ENCODE measurements at regions of chr4 and their contacts with region 1.

Region 1: DNA sequence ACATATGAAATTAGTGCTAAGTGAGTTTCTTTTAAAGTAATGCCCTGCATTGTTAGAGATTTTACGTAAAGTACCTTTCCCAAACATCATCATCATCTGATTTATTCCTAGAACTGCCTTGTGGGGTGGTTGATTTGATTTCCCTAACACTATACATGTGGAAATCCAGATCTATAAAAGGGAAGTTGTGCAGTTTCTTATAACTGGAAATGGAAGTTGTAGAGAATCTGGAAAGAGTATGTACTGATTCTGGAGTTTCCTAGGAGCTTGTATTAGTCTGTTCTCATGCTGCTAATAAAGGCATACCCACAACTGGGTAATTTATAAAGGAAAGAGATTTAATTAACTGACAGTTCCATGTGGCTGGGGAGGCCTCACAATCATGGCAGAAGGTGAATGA is 47.9 kb downstream of the BMP2K start:
- DNase-seq: no peak
- ATAC-seq: no peak
- H3K4me3 ChIP-seq: no peak overlapping the region
- H3K4me3 Mint-ChIP-seq: no peak overlapping the region
- H3K27ac ChIP-seq: peak overlapping the region in 1 of 2 donors; percentile 3
- H3K27ac Mint-ChIP-seq: no peak overlapping the region
- H3K4me1 ChIP-seq: peaks cover 0 to 8% of the 10 kb centered on the region in 2 donors
- H3K4me1 Mint-ChIP-seq: peaks cover 48% of the 10 kb centered on the region
- H3K27me3 ChIP-seq: no peaks in the 10 kb centered on the region
- H3K27me3 Mint-ChIP-seq: no peaks in the 10 kb centered on the region
- CTCF ChIP-seq: no peak

Region 2: DNA sequence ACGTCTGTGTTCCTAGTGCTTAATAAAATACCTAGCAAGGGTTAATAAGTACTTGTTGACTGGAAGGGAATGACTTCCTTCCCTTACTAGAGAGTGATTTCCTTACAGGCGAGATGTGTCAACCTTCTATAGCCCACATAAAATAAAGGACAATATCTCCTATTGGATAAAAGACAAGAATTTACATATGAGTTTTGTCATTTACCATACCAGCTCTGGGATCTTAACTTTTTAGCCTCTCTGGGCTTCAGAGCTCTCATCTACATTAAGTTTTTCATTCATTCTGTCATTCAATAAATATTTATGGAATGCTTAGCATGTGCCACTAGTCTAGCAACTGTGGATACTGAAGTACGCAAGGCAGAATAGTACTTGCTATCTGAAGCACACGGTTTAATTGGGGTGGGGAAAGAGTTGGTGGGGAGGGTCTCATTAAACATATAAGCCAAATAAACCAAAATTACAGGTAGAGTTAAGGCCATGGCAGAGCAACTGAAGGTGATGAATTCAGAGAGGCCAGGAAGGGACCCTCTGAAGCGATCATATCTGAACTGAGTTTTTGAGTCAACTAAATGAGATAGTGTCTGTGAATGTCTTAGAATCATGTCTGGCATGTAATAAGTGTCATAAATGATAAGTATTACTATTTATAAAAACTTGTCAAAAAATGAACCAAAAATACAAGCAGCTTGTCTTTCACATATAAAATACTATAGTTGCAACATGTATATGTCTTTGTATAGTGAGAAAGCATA is 139.5 kb before region 1 on chr4:
- CTCF ChIA-PET with region 1: no interaction called
- POLR2A ChIA-PET with region 1: no interaction called
- intact Hi-C with region 1: no loop called
- DNase-seq: no peak
- ATAC-seq: no peak
- H3K4me3 ChIP-seq: no peak overlapping the region
- H3K4me3 Mint-ChIP-seq: no peak overlapping the region
- H3K27ac ChIP-seq: no peak overlapping the region
- H3K27ac Mint-ChIP-seq: no peak overlapping the region
- H3K4me1 ChIP-seq: no peaks in the 10 kb centered on the region
- H3K4me1 Mint-ChIP-seq: no peaks in the 10 kb centered on the region
- H3K27me3 ChIP-seq: no peaks in the 10 kb centered on the region
- H3K27me3 Mint-ChIP-seq: no peaks in the 10 kb centered on the region
- CTCF ChIP-seq: no peak

Region 3: GRCh38 chr4:78809928-78810835 is 13.8 kb before region 1 on chr4:
- CTCF ChIA-PET with region 1: no interaction called
- POLR2A ChIA-PET with region 1: no interaction called
- intact Hi-C with region 1: loop called (anchors 2 kb)
- DNase-seq: no peak
- ATAC-seq: no peak
- H3K4me3 ChIP-seq: no peak overlapping the region
- H3K4me3 Mint-ChIP-seq: peak overlapping the region; percentile 49
- H3K27ac ChIP-seq: peak overlapping the region in 1 of 2 donors; percentile 40
- H3K27ac Mint-ChIP-seq: peak overlapping the region; percentile 15
- H3K4me1 ChIP-seq: peaks cover 12 to 39% of the 10 kb centered on the region in 2 donors
- H3K4me1 Mint-ChIP-seq: peaks cover 59% of the 10 kb centered on the region
- H3K27me3 ChIP-seq: no peaks in the 10 kb centered on the region
- H3K27me3 Mint-ChIP-seq: no peaks in the 10 kb centered on the region
- CTCF ChIP-seq: no peak

Measured in B cell (primary cell).